ENCODE measurements at regions of chr11 and their contacts with region 1.

Region 1: DNA sequence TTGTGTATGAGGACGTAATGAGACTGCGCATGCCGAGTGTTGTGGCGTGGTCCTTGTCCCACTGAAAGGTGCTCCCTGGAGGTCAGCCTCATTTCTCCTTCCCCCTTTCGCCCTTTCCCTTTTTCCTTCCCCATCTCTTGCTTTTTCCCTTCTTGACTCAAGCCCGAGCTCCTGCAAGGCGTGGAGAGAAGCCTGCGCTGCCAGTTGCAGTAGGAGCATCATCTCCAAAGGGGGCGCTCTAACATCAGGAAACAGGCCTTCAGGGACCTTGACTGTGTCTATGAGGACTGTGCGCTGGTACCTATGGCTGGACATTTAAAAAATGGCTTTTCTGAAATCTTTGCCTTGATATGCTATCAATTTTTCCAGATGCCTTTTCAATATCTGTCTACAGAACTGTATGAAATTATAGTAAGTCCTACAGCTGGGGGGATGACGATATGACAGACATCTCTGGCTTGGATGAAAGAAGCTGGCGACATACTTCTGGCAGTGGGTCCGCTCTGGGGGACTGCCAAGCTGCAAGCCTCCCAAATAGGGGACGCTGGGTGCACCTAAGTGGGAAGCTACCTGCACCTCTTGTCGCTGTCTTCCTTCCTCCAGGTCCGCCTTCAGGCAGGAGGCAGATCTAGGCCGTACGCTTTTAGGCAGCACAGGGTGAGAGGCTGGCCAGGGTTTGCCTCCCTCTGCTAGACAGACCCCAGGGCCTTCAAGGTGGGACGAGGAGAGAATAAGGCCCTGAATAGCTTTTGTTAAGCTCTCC is 96.5 kb downstream of the NXPE2 start:
- DNase-seq: peak; percentile 75
- H3K4me3 ChIP-seq: peak overlapping the region in 1 of 2 experiments; percentile 44; a peak in 1 of 4 replicates
- H3K27ac ChIP-seq: no peak overlapping the region; a peak in 1 of 4 replicates
- H3K4me1 ChIP-seq: peaks cover 0 to 27% of the 10 kb centered on the region in 2 experiments; a peak in 2 of 4 replicates
- H3K27me3 ChIP-seq: no peaks in the 10 kb centered on the region
- CTCF ChIP-seq: peak; percentile 65
- EP300 ChIP-seq: peak in 1 of 2 experiments; percentile 29; a peak in 1 of 4 replicates
- RAD21 ChIP-seq: peak; percentile 94

Region 2: DNA sequence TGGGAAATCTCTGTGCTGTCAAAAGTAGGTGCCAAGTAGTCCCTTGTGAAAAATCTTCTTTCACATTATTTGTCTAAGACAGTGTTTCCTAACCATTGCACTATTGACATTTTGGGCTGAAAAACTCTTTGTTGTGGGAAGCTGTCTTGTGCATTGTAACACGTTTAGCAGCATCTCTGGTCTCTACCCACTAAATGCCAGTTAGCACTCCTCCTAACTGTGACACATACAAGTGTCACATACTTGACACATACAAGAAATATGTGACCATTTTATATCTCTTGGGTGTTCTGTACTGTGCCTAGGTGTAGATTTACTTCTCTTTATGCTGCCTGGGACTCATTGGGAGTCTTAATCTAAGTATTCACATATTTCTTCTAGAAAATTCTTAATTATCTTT is 272.9 kb before region 1 on chr11:
- CTCF ChIA-PET with region 1: no interaction called
- POLR2A ChIA-PET with region 1: no interaction called
- DNase-seq: no peak
- H3K4me3 ChIP-seq: no peak overlapping the region
- H3K27ac ChIP-seq: no peak overlapping the region
- H3K4me1 ChIP-seq: 0 out of 4 replicates have a peak, but pooled peaks cover 0 to 5% of the 10 kb centered on the region in 2 experiments
- H3K27me3 ChIP-seq: no peaks in the 10 kb centered on the region
- CTCF ChIP-seq: no peak
- EP300 ChIP-seq: no peak
- RAD21 ChIP-seq: no peak

Region 3: DNA sequence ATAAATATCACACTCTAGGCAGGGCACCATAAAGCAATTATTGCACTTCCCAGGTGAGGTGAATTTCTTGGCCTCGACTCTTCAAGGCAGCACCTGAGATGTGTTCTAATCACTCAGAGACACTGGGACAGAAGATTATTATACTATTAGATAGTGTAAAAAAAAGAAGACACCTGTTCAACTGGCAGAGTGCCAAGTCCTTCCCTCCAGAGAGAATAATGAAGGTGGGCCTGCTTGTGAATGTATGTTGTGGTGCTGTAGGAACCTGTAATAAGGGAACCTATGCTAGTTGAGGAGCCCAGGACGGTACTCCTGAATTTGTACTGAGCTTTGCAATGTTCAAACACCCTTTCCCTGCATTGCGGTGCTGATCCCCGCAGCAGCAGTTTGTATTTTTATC is 11.0 kb after region 1 on chr11:
- CTCF ChIA-PET with region 1: interaction called, 27 read pairs
- POLR2A ChIA-PET with region 1: no interaction called
- DNase-seq: no peak
- H3K4me3 ChIP-seq: no peak overlapping the region
- H3K27ac ChIP-seq: no peak overlapping the region
- H3K4me1 ChIP-seq: peaks cover 0 to 3% of the 10 kb centered on the region in 2 experiments; a peak in 1 of 4 replicates
- H3K27me3 ChIP-seq: no peaks in the 10 kb centered on the region
- CTCF ChIP-seq: no peak
- EP300 ChIP-seq: no peak
- RAD21 ChIP-seq: no peak

Region 4: DNA sequence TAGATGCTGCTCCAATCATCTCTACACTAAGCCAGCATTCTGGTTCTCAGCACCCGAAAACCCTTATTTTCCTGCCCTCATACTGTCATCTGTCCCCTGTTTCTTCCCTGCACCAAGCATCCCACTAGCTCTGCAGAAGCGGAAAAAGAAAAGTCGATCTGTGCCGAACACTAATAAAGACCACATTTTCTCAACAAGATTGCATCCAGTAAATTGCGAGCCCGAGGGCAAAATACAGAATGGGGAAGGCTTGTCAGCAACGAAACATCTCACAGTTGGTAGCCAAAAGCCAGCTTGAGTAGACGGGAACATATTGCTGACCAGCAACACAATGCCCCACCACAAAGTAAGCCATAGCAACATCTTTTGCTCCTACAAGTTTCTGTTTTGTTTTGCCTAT is 502.0 kb after region 1 on chr11:
- CTCF ChIA-PET with region 1: interaction called, 10 read pairs
- POLR2A ChIA-PET with region 1: no interaction called
- DNase-seq: peak; percentile 58
- H3K4me3 ChIP-seq: peak overlapping the region in 1 of 2 experiments; percentile 17; a peak in 1 of 4 replicates
- H3K27ac ChIP-seq: peak overlapping the region in 1 of 2 experiments; percentile 98; a peak in 2 of 4 replicates
- H3K4me1 ChIP-seq: peaks cover 4 to 64% of the 10 kb centered on the region in 2 experiments; a peak in 3 of 4 replicates
- H3K27me3 ChIP-seq: no peaks in the 10 kb centered on the region
- CTCF ChIP-seq: no peak
- EP300 ChIP-seq: peak in 1 of 2 experiments; percentile 85; a peak in 2 of 4 replicates
- RAD21 ChIP-seq: peak; percentile 46

Region 5: DNA sequence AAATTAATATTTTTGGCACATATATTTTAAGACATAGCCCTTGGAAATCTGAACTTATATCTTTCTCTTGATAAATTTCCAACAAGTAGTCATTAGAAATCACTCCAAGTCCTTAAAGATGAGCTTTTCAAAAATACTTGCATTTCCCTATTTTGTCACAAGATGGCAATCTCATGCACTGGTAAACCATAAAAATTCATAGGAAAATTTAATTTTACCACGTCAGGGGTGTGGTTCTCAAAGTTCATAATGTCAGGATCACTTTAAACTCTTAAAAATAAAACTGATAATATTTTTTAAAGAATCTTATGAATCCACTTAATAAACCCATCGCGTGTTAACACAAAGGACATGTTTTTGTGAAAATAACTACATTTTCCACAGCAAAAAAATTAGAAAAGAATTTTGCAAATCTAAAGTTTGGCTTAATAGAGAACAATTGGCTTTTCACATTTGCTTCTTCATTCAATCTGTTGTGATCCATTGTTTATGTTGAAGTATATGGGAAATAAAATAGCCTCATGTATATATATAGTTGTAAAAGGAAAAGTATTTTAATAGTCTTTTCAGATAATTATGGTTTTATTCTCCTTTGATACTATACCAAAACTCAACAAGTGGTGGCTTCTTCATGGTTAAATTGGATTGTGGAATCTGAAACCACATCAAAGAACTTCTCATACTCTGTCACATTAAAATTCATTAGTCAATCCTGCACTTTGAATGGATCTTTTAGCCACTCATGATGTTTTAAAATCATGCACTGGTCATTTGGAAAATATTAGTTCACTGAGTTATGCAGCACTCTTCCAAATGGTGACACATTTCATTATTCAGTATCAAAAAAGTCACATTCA is 560.4 kb after region 1 on chr11:
- CTCF ChIA-PET with region 1: interaction called, 15 read pairs
- POLR2A ChIA-PET with region 1: no interaction called
- DNase-seq: peak; percentile 21
- H3K4me3 ChIP-seq: no peak overlapping the region
- H3K27ac ChIP-seq: no peak overlapping the region
- H3K4me1 ChIP-seq: peaks cover 0 to 6% of the 10 kb centered on the region in 2 experiments; a peak in 2 of 4 replicates
- H3K27me3 ChIP-seq: no peaks in the 10 kb centered on the region
- CTCF ChIP-seq: peak; percentile 85
- EP300 ChIP-seq: no peak
- RAD21 ChIP-seq: peak; percentile 83

Region 6: GRCh38 chr11:116148056-116148455 is 1373.3 kb after region 1 on chr11:
- CTCF ChIA-PET with region 1: no interaction called
- POLR2A ChIA-PET with region 1: no interaction called
- DNase-seq: no peak
- H3K4me3 ChIP-seq: no peak overlapping the region
- H3K27ac ChIP-seq: no peak overlapping the region
- H3K4me1 ChIP-seq: no peaks in the 10 kb centered on the region; a peak in 1 of 4 replicates
- H3K27me3 ChIP-seq: no peaks in the 10 kb centered on the region
- CTCF ChIP-seq: no peak
- EP300 ChIP-seq: no peak
- RAD21 ChIP-seq: no peak

Measured in SK-N-SH (cell line).